ENCODE measurements at regions of chr4 and their contacts with region 1.

Region 1: DNA sequence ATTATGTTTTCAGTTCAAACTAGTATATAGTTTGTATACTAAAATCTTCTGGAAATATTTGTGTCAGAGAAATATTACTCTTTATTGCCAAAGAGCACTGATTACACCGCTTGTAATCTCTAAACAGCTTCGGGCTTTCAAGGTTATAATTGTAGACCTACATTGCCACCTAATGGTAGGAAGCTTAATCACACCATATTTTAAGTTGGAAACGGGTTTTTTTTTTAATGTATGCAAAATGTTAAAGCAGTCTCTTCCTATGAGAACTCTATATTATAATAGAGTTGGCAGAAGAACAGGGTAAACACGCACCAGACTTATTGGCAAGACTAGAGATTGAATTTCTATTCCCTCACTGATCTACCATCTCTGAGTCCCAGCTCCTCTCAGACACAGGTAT is 19.5 kb upstream of the NFXL1 start:
- H3K4me3 Mint-ChIP-seq: no peak overlapping the region
- H3K27ac Mint-ChIP-seq: no peak overlapping the region
- H3K4me1 Mint-ChIP-seq: peaks cover 16% of the 10 kb centered on the region
- H3K27me3 Mint-ChIP-seq: peaks cover 1% of the 10 kb centered on the region

Region 2: DNA sequence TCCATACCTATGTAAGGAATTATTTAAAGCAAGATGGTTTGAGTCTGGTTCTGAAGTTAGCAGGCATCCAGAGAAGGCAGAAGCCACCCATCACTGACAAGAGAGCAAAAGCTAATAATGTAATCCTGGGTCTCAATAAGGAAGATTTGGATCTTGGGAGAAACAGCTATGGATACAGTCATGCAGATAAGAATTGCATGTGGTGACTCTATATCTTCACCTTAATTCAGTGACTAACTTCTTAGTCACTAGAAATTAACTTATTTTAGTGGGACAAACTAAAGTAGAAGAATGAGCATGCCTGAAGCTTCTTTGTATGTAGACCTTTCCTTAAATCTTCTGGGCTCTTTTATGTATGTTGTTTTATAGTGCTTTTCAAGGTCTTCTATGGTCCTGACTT is 382.2 kb before region 1 on chr4:
- intact Hi-C with region 1: no loop called
- H3K4me3 Mint-ChIP-seq: no peak overlapping the region
- H3K27ac Mint-ChIP-seq: no peak overlapping the region
- H3K4me1 Mint-ChIP-seq: no peaks in the 10 kb centered on the region
- H3K27me3 Mint-ChIP-seq: no peaks in the 10 kb centered on the region

Region 3: DNA sequence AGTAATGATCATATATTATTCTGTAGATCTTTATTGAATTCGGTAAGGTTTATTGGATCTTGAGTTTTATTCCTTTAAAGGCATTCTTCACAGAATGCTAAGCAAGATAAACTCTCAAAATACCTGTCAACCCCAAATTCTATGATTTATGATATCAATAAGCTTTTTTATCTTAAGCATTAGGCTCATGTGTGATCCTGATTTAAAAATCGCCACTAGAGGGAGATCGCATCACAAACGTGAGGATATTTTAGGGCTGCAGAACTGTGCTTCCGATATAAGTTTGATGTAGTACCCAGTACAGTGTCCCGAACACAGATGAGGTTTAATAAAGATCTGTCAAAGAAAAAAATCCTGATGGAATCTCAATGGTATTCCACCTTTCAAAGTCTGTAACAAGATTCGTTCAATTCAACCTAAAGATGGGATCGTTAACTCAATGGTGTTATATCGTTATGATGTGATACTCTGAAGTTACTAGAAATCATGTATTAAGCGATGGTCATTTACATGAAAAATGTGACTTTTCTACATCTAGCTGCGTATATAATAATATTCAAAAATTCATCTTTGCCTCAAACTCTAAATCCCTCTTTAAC is 264.9 kb before region 1 on chr4:
- intact Hi-C with region 1: loop called (anchors 5 kb)
- H3K4me3 Mint-ChIP-seq: no peak overlapping the region
- H3K27ac Mint-ChIP-seq: no peak overlapping the region
- H3K4me1 Mint-ChIP-seq: no peaks in the 10 kb centered on the region
- H3K27me3 Mint-ChIP-seq: peaks cover 4% of the 10 kb centered on the region